Heart right ventricle (tissue), 16 donors: ENCODE measurements at regions of chr2 and their contacts with region 1.

Region 1: DNA sequence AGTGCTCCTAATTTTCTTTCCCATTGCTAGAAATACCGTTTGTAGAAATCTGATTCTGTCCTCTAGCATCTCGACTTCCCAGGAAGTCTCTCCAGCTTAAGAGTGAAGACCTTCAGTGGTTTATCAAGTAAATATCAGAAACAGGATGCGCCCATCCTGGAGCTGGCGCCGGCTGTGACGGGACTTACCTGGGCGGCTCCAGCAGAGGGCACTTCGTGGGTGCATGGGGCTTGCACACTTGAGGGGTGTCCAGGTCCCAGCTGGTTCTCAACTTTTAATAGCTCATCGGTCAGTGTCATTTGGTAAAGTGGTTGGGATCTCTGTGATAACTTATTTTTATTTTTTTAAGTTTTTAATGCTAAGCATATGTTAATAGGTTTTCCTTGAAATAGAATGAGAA is 167.0 kb upstream of the TPO start:
- DNase-seq: no peak
- ATAC-seq: no peak
- H3K4me3 ChIP-seq: no peak overlapping the region
- H3K27ac ChIP-seq: no peak overlapping the region
- H3K4me1 ChIP-seq: peaks cover 0 to 16% (median 0%) of the 10 kb centered on the region in 9 donors
- H3K27me3 ChIP-seq: peaks cover 0 to 17% (median 4%) of the 10 kb centered on the region in 7 donors
- CTCF ChIP-seq: no peak

Region 2: DNA sequence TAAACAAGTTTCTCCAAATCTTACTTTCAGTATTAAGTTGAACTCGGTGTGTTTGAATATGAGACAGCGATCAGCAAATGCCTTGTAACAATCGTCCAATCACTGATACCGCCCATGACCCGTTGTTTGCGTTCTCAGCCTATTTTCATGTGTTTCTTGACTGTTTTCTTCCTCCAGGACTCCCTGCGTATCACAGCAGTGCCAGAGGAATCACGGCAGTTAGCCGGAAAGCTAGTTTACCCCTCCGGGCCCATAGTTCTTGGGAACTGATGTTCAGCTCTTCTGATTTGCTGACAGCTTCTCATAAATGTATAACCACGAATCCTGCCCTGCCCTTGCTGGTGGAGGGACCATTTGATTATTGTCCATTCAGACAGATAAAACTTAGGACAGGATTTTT is 124.8 kb after region 1 on chr2:
- intact Hi-C with region 1: loop called in 3 of 10 experiments (anchors 10 kb)
- DNase-seq: no peak
- ATAC-seq: no peak
- H3K4me3 ChIP-seq: no peak overlapping the region
- H3K27ac ChIP-seq: no peak overlapping the region
- H3K4me1 ChIP-seq: peaks cover 0 to 3% (median 0%) of the 10 kb centered on the region in 9 donors
- H3K27me3 ChIP-seq: peaks cover 0 to 4% (median 0%) of the 10 kb centered on the region in 7 donors
- CTCF ChIP-seq: no peak

Region 3: GRCh38 chr2:2564300-2565078 is 1318.2 kb after region 1 on chr2:
- intact Hi-C with region 1: loop called in 1 of 10 experiments (anchors 5 kb)
- DNase-seq: no peak
- ATAC-seq: peak in 1 of 8 donors; percentile 23
- H3K4me3 ChIP-seq: no peak overlapping the region
- H3K27ac ChIP-seq: no peak overlapping the region
- H3K4me1 ChIP-seq: no peaks in the 10 kb centered on the region
- H3K27me3 ChIP-seq: peaks cover 0 to 10% (median 0%) of the 10 kb centered on the region in 7 donors
- CTCF ChIP-seq: no peak